Activated B cell treated with CpG ODN at 0.5 μM for 24 hours (primary cell): ENCODE measurements at regions of chr1 and their contacts with region 1.

Region 1: DNA sequence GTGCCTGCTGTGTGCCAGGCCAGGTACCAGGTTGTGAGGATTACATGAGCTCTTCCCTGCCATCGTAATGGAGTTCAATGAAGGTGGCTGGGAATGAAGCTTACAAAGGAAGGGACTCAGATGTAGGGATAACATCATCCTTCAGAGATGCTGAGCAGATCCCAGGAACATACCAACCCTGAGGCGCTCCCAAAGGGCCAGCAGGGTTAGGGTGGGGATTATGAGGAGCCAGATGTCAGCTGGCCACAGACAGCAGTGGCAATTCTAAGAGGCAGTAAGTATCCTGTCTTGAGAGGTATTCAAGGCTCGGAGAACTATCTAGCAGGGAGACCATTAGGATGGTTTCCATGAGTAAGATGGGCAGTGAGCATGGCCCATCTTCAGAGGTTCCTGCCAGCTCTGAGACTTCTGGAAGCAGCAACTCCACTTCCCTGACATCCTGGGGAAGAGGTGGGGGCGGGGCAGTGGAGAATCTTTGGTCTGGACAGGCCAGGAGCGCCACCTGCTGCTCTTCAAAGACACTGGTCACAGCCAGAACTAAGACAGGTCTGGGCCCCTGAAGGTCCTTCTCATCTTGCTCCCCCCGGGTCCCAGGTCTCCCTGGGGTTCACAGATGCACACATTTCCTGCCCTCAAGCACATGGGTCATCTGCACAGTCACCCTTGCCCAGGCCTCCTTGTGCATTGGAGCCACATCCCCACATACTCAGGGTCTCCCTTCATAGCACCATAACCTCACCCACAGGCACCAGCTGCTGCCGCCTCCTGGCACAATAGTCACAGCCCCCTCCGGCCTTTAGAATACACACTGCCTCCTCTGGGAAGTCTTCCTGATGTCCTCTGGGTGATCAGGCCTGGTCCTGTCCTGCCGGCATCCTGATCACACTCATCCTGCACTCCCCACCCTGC is 2.7 kb upstream of the SDC3 start:
- DNase-seq: peak; percentile 47
- ATAC-seq: peak; percentile 48
- H3K4me3 Mint-ChIP-seq: no peak overlapping the region
- H3K27ac Mint-ChIP-seq: no peak overlapping the region
- H3K4me1 Mint-ChIP-seq: peaks cover 25% of the 10 kb centered on the region
- H3K27me3 Mint-ChIP-seq: peaks cover 30% of the 10 kb centered on the region
- CTCF ChIP-seq: no peak

Region 2: DNA sequence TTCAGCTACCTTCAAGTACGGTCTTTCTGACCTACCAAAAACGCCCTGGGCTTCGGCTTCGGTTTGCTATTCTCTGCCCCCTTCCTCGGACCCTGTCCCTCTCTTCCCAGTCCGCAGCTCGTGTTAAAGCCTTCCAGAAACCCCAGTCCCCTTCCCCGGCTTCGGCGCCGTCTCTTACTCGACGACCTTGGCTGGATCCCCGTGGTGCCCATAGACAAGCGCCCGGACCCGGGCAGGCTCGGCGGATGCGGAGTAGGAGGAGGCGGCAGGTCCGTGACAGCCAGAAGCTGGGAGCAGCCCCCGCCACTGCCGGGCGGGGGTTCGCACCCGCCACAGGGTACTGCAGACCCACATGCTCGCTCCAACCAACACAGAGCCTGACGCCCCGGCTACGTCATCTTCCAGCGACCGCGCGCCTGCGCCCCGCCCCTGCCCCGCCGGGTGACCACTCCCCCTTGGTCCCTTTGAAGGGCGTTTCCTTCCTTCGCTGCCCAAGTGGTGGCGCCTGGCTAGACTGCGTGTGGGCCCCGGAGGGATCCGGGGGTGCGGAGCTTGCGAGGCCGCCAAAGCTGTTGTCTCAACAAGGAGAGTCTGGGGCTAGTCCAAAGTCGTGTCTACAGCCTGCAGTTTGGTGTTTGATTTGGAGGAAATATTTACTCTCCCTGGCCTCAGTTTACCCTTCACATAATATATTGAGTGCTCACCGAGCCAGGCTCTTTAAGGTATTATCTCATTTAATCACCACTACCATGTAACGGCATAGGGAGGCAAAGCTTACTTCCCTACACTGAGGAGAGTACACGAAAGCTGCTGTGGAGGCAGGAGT is 1680.5 kb before region 1 on chr1 and contains the start of gene MECR:
- CTCF ChIA-PET with region 1: no interaction called
- POLR2A ChIA-PET with region 1: no interaction called
- intact Hi-C with region 1: loop called (anchors 10 kb)
- DNase-seq: peak; percentile 98
- ATAC-seq: peak; percentile 97
- H3K4me3 Mint-ChIP-seq: peak within 1 kb of the TSS; percentile 93
- H3K27ac Mint-ChIP-seq: peak within 1 kb of the TSS; percentile 84
- H3K4me1 Mint-ChIP-seq: peaks cover 18% of the 10 kb centered on the region
- H3K27me3 Mint-ChIP-seq: peaks cover 11% of the 10 kb centered on the region
- CTCF ChIP-seq: no peak
- total RNA-seq, gene MECR: 18.7 and 23.7 TPM in 2 replicates

Region 3: DNA sequence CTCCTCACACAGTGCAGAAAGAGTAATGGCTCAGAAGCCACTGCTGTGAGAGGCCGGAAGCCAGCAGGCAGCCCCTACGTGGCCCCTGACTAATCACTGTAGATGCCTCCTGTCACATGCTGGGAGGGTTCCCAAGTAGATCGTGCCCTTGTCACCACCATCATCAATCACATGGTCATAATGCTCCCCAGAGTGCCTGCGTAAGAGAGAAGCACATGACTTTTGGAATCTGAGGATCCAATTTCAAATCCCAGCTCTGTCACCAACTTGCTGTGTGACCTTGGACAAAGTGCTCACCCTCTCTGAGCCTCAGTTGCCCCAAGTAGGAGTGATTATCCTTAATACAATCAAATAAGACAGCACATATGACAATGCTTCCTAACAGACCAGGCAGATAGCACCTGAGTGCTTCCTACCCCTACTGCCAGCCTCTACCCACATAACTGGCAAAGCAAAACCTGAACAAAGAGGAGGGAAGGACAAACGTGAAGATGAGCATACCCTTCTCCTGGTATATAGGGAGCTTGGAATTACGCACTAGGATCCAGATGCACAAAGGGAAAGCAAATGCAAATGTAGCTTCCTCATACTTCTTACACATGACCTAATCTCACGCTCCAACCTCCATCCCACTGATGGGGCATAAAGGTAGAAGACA is 68.5 kb before region 1 on chr1:
- CTCF ChIA-PET with region 1: no interaction called
- POLR2A ChIA-PET with region 1: no interaction called
- intact Hi-C with region 1: no loop called
- DNase-seq: no peak
- ATAC-seq: no peak
- H3K4me3 Mint-ChIP-seq: no peak overlapping the region
- H3K27ac Mint-ChIP-seq: no peak overlapping the region
- H3K4me1 Mint-ChIP-seq: no peaks in the 10 kb centered on the region
- H3K27me3 Mint-ChIP-seq: peaks cover 66% of the 10 kb centered on the region
- CTCF ChIP-seq: no peak

Region 4: DNA sequence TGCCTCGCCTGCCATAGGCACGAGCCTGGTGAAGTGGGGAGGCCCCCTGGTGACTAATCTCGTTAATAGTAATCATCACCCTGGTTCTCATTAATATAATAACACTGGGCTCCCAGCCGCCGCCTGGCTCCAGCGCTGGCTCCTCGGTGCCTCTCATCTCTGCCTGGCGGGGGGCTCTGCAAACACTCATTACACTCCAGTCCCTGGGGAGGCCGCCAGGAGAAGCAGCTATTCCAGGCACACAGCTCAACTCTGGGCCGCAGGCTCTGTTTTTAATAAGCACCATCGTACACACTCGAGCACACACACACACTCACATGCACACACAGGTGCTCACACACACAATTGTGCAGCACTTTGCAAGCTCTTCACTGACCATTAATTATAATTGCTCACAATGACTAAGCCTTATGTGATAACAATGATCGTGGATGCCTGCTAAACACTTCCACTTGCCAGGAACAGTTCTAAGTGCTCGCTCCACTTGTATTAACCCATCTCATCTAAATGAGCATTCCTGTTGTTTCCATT is 55.0 kb before region 1 on chr1:
- CTCF ChIA-PET with region 1: no interaction called
- POLR2A ChIA-PET with region 1: interaction called, 8 read pairs
- intact Hi-C with region 1: loop called (anchors 2 kb)
- DNase-seq: no peak
- ATAC-seq: peak; percentile 34
- H3K4me3 Mint-ChIP-seq: no peak overlapping the region
- H3K27ac Mint-ChIP-seq: no peak overlapping the region
- H3K4me1 Mint-ChIP-seq: peaks cover 2% of the 10 kb centered on the region
- H3K27me3 Mint-ChIP-seq: peaks cover 39% of the 10 kb centered on the region
- CTCF ChIP-seq: no peak

Region 5: GRCh38 chr1:30881319-30882181 is 29.8 kb before region 1 on chr1:
- CTCF ChIA-PET with region 1: no interaction called
- POLR2A ChIA-PET with region 1: interaction called, 3 read pairs
- intact Hi-C with region 1: loop called (anchors 2 kb)
- DNase-seq: peak; percentile 63
- ATAC-seq: peak; percentile 90
- H3K4me3 Mint-ChIP-seq: peak overlapping the region; percentile 9
- H3K27ac Mint-ChIP-seq: peak overlapping the region; percentile 60
- H3K4me1 Mint-ChIP-seq: peaks cover 19% of the 10 kb centered on the region
- H3K27me3 Mint-ChIP-seq: peaks cover 38% of the 10 kb centered on the region
- CTCF ChIP-seq: no peak

Region 6: DNA sequence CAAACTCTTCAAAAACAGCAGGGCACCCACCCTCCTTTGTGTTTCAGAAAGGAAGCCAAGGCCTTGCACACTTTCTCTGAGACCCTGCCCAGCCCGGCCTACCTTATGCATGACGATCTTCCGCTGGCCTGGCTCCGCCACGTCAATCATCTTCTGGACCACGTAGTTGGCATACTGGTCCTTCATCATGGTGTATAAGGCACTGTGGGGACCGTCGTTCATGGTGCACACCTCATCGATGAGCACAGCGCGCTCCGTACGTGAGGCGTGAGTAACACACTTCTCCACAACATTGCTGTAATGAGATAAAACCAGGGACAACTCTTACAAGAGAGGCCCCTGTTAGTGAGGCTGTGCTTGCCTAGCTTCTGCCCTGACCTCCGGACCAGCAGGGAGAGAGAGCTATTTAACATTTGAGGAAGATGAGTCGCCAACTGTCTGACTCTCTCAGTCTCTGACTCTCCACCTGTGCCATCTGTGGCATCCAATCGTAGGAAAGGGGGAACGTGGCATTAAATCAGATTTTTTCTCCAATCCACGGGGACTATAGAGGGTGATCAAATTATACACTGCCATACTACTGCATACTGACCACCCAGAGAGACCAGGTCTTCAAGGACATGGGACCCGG is 25.4 kb after region 1 on chr1:
- CTCF ChIA-PET with region 1: no interaction called
- POLR2A ChIA-PET with region 1: no interaction called
- intact Hi-C with region 1: no loop called
- DNase-seq: no peak
- ATAC-seq: no peak
- H3K4me3 Mint-ChIP-seq: no peak overlapping the region
- H3K27ac Mint-ChIP-seq: no peak overlapping the region
- H3K4me1 Mint-ChIP-seq: peaks cover 20% of the 10 kb centered on the region
- H3K27me3 Mint-ChIP-seq: no peaks in the 10 kb centered on the region
- CTCF ChIP-seq: no peak

Region 7: DNA sequence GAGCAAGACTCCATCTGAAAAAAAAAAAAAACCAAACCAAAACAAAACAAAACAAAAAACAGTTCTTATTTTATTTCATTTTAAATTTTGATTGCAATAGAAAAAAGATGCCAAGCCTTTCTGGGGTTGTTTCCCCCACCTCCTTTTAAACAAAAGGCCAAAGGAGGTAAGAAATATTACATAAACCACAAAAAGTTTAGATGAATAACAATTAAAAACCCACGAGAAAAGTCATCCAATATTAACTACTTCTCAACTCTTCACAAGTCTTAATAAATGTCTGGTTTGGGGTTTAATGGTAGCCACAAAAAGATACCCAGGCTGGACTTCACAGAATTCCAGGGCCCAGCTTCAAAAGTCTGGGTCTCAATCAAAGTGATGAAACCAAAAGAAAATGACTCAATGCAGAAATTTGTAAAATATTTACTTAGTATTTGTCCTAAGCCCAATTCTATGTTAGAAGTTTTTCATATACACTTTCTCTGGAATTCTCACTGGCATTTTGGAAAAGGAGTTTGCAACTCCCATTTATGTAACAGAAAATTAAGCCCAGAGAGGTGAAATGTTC is 44.2 kb after region 1 on chr1:
- CTCF ChIA-PET with region 1: no interaction called
- POLR2A ChIA-PET with region 1: no interaction called
- intact Hi-C with region 1: no loop called
- DNase-seq: no peak
- ATAC-seq: no peak
- H3K4me3 Mint-ChIP-seq: no peak overlapping the region
- H3K27ac Mint-ChIP-seq: no peak overlapping the region
- H3K4me1 Mint-ChIP-seq: peaks cover 9% of the 10 kb centered on the region
- H3K27me3 Mint-ChIP-seq: no peaks in the 10 kb centered on the region
- CTCF ChIP-seq: no peak

Region 8: GRCh38 chr1:31460027-31460426 is 548.7 kb after region 1 on chr1:
- CTCF ChIA-PET with region 1: no interaction called
- POLR2A ChIA-PET with region 1: no interaction called
- intact Hi-C with region 1: no loop called
- DNase-seq: no peak
- ATAC-seq: no peak
- H3K4me3 Mint-ChIP-seq: no peak overlapping the region
- H3K27ac Mint-ChIP-seq: no peak overlapping the region
- H3K4me1 Mint-ChIP-seq: no peaks in the 10 kb centered on the region
- H3K27me3 Mint-ChIP-seq: peaks cover 5% of the 10 kb centered on the region
- CTCF ChIP-seq: no peak